Activated CD4-positive, alpha-beta memory T cell treated with anti-CD3 and anti-CD28 coated beads for 36 hours (primary cell): ENCODE measurements at regions of chr17 and their contacts with region 1.

Region 1: GRCh38 chr17:32486111-32486700 is 587 bp upstream of the CDK5R1 start:
- DNase-seq: peak; percentile 73
- H3K4me3 Mint-ChIP-seq: peak overlapping the region; percentile 54
- H3K27ac Mint-ChIP-seq: peak overlapping the region; percentile 18
- H3K4me1 Mint-ChIP-seq: peaks cover 46% of the 10 kb centered on the region
- H3K27me3 Mint-ChIP-seq: no peaks in the 10 kb centered on the region

Region 2: GRCh38 chr17:32444308-32445073 is 41.7 kb before region 1 on chr17 and contains the start of gene PSMD11:
- CTCF ChIA-PET with region 1: interaction called, 12 read pairs
- POLR2A ChIA-PET with region 1: interaction called, 19 read pairs
- intact Hi-C with region 1: loop called (anchors 5 kb)
- DNase-seq: peak; percentile 99
- H3K4me3 Mint-ChIP-seq: peak within 1 kb of the TSS; percentile 89
- H3K27ac Mint-ChIP-seq: peak within 1 kb of the TSS; percentile 91
- H3K4me1 Mint-ChIP-seq: peaks cover 49% of the 10 kb centered on the region
- H3K27me3 Mint-ChIP-seq: no peaks in the 10 kb centered on the region
- total RNA-seq, gene PSMD11: 161 to 162 TPM

Region 3: GRCh38 chr17:32503251-32504165 is 17.3 kb after region 1 on chr17:
- CTCF ChIA-PET with region 1: interaction called, 9 read pairs
- POLR2A ChIA-PET with region 1: interaction called, 3 read pairs
- intact Hi-C with region 1: loop called (anchors 1 kb)
- DNase-seq: peak; percentile 67
- H3K4me3 Mint-ChIP-seq: peak overlapping the region; percentile 52
- H3K27ac Mint-ChIP-seq: peak overlapping the region; percentile 95
- H3K4me1 Mint-ChIP-seq: peaks cover 66% of the 10 kb centered on the region
- H3K27me3 Mint-ChIP-seq: no peaks in the 10 kb centered on the region

Region 4: GRCh38 chr17:32609085-32609484 is 122.9 kb after region 1 on chr17:
- CTCF ChIA-PET with region 1: interaction called, 4 read pairs
- POLR2A ChIA-PET with region 1: no interaction called
- intact Hi-C with region 1: loop called (anchors 1 kb)
- DNase-seq: peak; percentile 83
- H3K4me3 Mint-ChIP-seq: no peak overlapping the region
- H3K27ac Mint-ChIP-seq: no peak overlapping the region
- H3K4me1 Mint-ChIP-seq: peaks cover 7% of the 10 kb centered on the region
- H3K27me3 Mint-ChIP-seq: no peaks in the 10 kb centered on the region

Region 5: DNA sequence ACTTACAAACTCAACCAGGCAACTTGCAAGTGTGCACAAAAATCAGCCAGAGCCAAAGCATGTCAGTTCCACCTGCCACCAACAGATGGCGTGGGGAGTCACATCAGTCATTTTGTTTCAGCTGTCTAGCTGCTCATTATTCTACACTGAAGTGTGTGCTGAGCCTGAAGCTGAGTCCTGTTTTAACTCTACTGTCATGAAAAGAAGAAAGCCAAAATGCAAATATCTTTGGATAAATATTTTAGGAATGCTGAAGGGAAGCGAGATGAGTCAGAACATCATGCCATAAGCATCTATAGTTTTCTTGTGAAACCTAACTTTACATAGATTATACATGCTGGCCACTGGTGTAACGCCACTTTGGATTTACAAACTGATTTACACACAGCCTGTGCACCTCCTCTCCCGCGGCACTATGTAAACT is 173.2 kb after region 1 on chr17:
- CTCF ChIA-PET with region 1: interaction called, 20 read pairs
- POLR2A ChIA-PET with region 1: no interaction called
- intact Hi-C with region 1: no loop called
- DNase-seq: peak; percentile 80
- H3K4me3 Mint-ChIP-seq: no peak overlapping the region
- H3K27ac Mint-ChIP-seq: no peak overlapping the region
- H3K4me1 Mint-ChIP-seq: no peaks in the 10 kb centered on the region
- H3K27me3 Mint-ChIP-seq: no peaks in the 10 kb centered on the region

Region 6: GRCh38 chr17:32755045-32755805 is 269.0 kb after region 1 on chr17:
- CTCF ChIA-PET with region 1: interaction called, 8 read pairs
- POLR2A ChIA-PET with region 1: no interaction called
- intact Hi-C with region 1: loop called (anchors 1 kb)
- DNase-seq: no peak
- H3K4me3 Mint-ChIP-seq: no peak overlapping the region
- H3K27ac Mint-ChIP-seq: no peak overlapping the region
- H3K4me1 Mint-ChIP-seq: peaks cover 15% of the 10 kb centered on the region
- H3K27me3 Mint-ChIP-seq: no peaks in the 10 kb centered on the region